CD8-positive, alpha-beta T cell (primary cell): ENCODE measurements at regions of chr11 and their contacts with region 1.

Region 1: GRCh38 chr11:75280227-75280701 is 39.7 kb downstream of the TPBGL start:
- DNase-seq: peak; percentile 60 to 89 (median 79)
- ATAC-seq: peak; percentile 67
- H3K4me3 ChIP-seq: no peak overlapping the region
- H3K4me3 Mint-ChIP-seq: no peak overlapping the region
- H3K27ac ChIP-seq: no peak overlapping the region
- H3K27ac Mint-ChIP-seq: peak overlapping the region; percentile 90
- H3K4me1 ChIP-seq: peaks cover 48% of the 10 kb centered on the region
- H3K4me1 Mint-ChIP-seq: peaks cover 46% of the 10 kb centered on the region
- H3K27me3 ChIP-seq: no peaks in the 10 kb centered on the region
- H3K27me3 Mint-ChIP-seq: no peaks in the 10 kb centered on the region
- CTCF ChIP-seq: peak; percentile 96

Region 2: DNA sequence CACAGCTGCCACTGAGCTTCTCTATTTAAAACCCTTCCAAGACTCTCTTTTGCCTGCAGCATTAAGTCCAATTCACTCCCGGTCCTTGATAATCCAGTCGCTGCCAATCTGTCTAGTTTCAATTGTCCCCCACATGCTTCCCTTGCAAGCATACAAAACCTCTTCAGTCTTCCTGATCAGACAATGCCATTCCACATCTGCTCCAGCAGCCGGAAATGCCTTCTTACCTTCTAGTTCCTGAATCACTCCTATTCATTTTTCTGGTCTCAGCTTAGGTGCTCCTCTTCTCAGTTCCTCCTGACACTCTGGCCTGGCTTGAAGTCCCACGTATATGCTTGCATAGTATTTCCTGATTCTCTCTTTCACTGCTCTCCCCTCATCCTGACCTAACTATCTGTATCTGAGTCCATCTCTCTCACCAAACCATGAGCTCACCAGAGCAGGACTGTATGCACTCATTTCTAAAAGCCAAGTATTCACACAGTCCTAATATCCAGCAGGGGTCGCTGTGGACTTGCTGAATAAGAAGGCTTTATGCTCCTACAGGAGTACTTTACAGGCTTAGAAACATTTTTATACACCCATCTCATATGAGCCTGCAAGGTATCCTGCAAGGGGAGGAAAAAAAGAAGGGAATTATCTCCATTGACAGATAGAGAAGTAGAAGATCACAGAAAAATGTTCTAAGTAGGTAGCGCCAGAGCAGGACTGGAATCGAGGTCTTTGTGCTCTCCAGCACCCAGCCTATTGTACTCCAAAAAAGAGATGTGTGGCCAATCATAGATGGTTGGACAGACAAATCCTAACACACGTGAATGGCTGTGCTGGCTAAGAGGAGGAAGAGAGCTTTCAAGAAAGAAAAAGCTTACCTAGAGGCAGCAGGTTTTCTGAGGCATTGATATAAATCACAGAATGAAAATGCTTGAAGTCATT is 350.6 kb before region 1 on chr11:
- CTCF ChIA-PET with region 1: no interaction called
- POLR2A ChIA-PET with region 1: no interaction called
- intact Hi-C with region 1: no loop called
- DNase-seq: peak; percentile 30 to 86 (median 66)
- ATAC-seq: peak; percentile 76
- H3K4me3 ChIP-seq: no peak overlapping the region
- H3K4me3 Mint-ChIP-seq: no peak overlapping the region
- H3K27ac ChIP-seq: no peak overlapping the region
- H3K27ac Mint-ChIP-seq: no peak overlapping the region
- H3K4me1 ChIP-seq: no peaks in the 10 kb centered on the region
- H3K4me1 Mint-ChIP-seq: no peaks in the 10 kb centered on the region
- H3K27me3 ChIP-seq: no peaks in the 10 kb centered on the region
- H3K27me3 Mint-ChIP-seq: no peaks in the 10 kb centered on the region
- CTCF ChIP-seq: peak; percentile 90

Region 3: GRCh38 chr11:75263944-75264349 is 16.3 kb before region 1 on chr11:
- CTCF ChIA-PET with region 1: interaction called, 48 read pairs
- POLR2A ChIA-PET with region 1: interaction called, 31 read pairs
- intact Hi-C with region 1: no loop called
- DNase-seq: peak in 4 of 9 experiments; percentile 33 to 55 (median 42)
- ATAC-seq: no peak
- H3K4me3 ChIP-seq: no peak overlapping the region
- H3K4me3 Mint-ChIP-seq: no peak overlapping the region
- H3K27ac ChIP-seq: peak overlapping the region in 1 of 2 experiments; percentile 64
- H3K27ac Mint-ChIP-seq: peak overlapping the region; percentile 74
- H3K4me1 ChIP-seq: peaks cover 55% of the 10 kb centered on the region
- H3K4me1 Mint-ChIP-seq: peaks cover 49% of the 10 kb centered on the region
- H3K27me3 ChIP-seq: no peaks in the 10 kb centered on the region
- H3K27me3 Mint-ChIP-seq: no peaks in the 10 kb centered on the region
- CTCF ChIP-seq: no peak

Region 4: GRCh38 chr11:75328426-75329277 is 48.4 kb after region 1 on chr11:
- CTCF ChIA-PET with region 1: interaction called, 20 read pairs
- POLR2A ChIA-PET with region 1: interaction called, 3 read pairs
- intact Hi-C with region 1: loop called (anchors 1 kb)
- DNase-seq: peak in 8 of 9 experiments; percentile 48 to 79 (median 64)
- ATAC-seq: peak; percentile 93
- H3K4me3 ChIP-seq: no peak overlapping the region
- H3K4me3 Mint-ChIP-seq: peak overlapping the region; percentile 58
- H3K27ac ChIP-seq: peak overlapping the region; percentile 37 to 47
- H3K27ac Mint-ChIP-seq: peak overlapping the region; percentile 90
- H3K4me1 ChIP-seq: peaks cover 60% of the 10 kb centered on the region
- H3K4me1 Mint-ChIP-seq: peaks cover 69% of the 10 kb centered on the region
- H3K27me3 ChIP-seq: no peaks in the 10 kb centered on the region
- H3K27me3 Mint-ChIP-seq: no peaks in the 10 kb centered on the region
- CTCF ChIP-seq: no peak

Region 5: GRCh38 chr11:75342903-75343870 is 62.9 kb after region 1 on chr11:
- CTCF ChIA-PET with region 1: interaction called, 15 read pairs
- POLR2A ChIA-PET with region 1: interaction called, 6 read pairs
- intact Hi-C with region 1: loop called in 1 of 2 experiments (anchors 5 kb)
- DNase-seq: no peak
- ATAC-seq: no peak
- H3K4me3 ChIP-seq: no peak overlapping the region
- H3K4me3 Mint-ChIP-seq: no peak overlapping the region
- H3K27ac ChIP-seq: peak overlapping the region in 1 of 2 experiments; percentile 12
- H3K27ac Mint-ChIP-seq: peak overlapping the region; percentile 85
- H3K4me1 ChIP-seq: peaks cover 98% of the 10 kb centered on the region
- H3K4me1 Mint-ChIP-seq: peaks cover 97% of the 10 kb centered on the region
- H3K27me3 ChIP-seq: no peaks in the 10 kb centered on the region
- H3K27me3 Mint-ChIP-seq: no peaks in the 10 kb centered on the region
- CTCF ChIP-seq: no peak

Region 6: GRCh38 chr11:75380711-75381420 is 100.6 kb after region 1 on chr11:
- CTCF ChIA-PET with region 1: interaction called, 650 read pairs
- POLR2A ChIA-PET with region 1: interaction called, 27 read pairs
- intact Hi-C with region 1: loop called (anchors 1 kb)
- DNase-seq: no peak
- ATAC-seq: no peak
- H3K4me3 ChIP-seq: no peak overlapping the region
- H3K4me3 Mint-ChIP-seq: no peak overlapping the region
- H3K27ac ChIP-seq: no peak overlapping the region
- H3K27ac Mint-ChIP-seq: peak overlapping the region; percentile 56
- H3K4me1 ChIP-seq: peaks cover 23% of the 10 kb centered on the region
- H3K4me1 Mint-ChIP-seq: peaks cover 20% of the 10 kb centered on the region
- H3K27me3 ChIP-seq: no peaks in the 10 kb centered on the region
- H3K27me3 Mint-ChIP-seq: no peaks in the 10 kb centered on the region
- CTCF ChIP-seq: no peak

Region 7: DNA sequence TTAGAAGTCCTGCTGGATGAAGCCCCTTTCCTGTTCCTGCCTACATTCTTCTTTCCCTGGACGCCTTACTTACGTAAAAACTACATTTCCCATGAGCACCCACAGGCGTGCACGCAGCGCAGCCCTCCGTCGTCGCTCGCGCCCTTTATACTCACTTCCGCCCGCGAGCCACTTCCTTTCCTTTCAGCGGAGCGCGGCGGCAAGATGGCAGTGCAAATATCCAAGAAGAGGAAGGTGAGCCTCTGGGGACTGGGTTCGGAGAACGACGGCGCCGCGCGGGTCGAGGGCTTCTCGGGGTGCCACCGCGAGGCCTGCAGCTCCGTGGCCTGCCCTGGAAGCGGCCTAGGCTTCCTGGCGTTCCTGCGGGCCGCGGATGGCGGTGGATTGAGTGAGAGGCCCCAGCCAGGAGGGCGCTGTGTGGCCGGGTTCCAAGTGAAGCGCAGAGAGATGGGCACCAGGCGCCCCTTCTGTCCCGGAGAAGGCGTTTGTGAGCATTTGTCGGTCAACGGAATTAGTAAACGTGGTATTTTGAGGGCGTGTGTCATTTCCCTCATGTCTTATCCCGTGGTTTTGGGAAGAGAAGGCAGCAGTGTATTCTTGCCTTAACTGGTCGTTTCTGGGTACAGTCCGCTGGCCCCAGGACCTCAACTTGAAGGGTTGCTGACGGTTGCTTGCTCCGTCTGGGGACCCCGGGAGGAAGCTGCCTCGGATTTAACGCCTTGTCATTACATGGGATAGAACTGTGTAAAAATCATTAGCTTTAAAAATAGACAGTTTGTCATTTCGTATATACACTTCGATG is 119.3 kb after region 1 on chr11 and contains the start of gene RPS3:
- CTCF ChIA-PET with region 1: interaction called, 24 read pairs
- POLR2A ChIA-PET with region 1: interaction called, 16 read pairs
- intact Hi-C with region 1: no loop called
- DNase-seq: peak; percentile 72 to 93 (median 88)
- ATAC-seq: peak; percentile 88
- H3K4me3 ChIP-seq: peak within 1 kb of the TSS; percentile 69 to 76
- H3K4me3 Mint-ChIP-seq: peak within 1 kb of the TSS; percentile 95
- H3K27ac ChIP-seq: peak within 1 kb of the TSS; percentile 88 to 89
- H3K27ac Mint-ChIP-seq: peak within 1 kb of the TSS; percentile 95
- H3K4me1 ChIP-seq: peaks cover 28% of the 10 kb centered on the region
- H3K4me1 Mint-ChIP-seq: peaks cover 48% of the 10 kb centered on the region
- H3K27me3 ChIP-seq: no peaks in the 10 kb centered on the region
- H3K27me3 Mint-ChIP-seq: no peaks in the 10 kb centered on the region
- CTCF ChIP-seq: no peak
- total RNA-seq, gene RPS3: 4,683 to 5,039 TPM

Region 8: DNA sequence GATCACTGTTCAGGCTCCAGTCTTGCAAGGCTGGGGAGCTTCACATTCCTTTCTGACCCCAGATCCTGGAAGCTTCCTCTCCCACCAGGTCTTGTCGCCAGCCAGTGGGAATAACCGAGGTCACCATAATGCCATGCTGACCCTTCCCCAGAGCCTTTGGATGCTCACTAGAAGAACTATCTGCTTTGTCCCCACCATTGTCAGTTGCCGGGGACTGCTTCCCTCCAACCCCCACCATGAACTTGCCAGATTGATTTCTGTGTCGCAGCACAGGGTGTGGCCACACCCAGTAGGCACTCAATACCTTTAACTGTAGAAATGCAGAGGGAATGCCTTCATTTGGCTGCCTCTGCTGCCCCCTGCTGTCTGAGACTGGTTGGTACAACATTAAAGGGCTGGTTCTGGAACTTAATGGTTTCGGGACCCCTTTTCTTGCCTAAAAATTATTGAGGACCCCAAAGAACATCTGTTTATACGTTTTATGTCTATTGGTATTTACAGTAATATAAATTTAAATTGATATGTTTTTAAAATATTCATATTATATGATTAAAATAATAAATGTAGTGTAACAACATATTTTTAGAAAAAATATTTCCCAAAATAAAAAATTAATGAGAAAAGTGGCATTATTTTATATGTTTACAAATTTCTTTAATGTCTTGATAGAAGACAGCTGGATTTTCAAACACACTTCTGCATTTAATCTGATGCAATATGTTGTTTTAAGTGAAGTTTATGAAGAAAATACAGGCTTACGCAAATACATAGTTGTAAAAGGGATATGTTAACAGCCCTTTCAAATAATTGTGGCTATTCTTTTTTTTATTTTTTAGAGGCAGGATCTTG is 252.2 kb after region 1 on chr11:
- CTCF ChIA-PET with region 1: interaction called, 25 read pairs
- POLR2A ChIA-PET with region 1: no interaction called
- intact Hi-C with region 1: loop called (anchors 1 to 2 kb)
- DNase-seq: peak; percentile 70 to 91 (median 84)
- ATAC-seq: peak; percentile 91
- H3K4me3 ChIP-seq: no peak overlapping the region
- H3K4me3 Mint-ChIP-seq: no peak overlapping the region
- H3K27ac ChIP-seq: no peak overlapping the region
- H3K27ac Mint-ChIP-seq: no peak overlapping the region
- H3K4me1 ChIP-seq: peaks cover 8% of the 10 kb centered on the region
- H3K4me1 Mint-ChIP-seq: peaks cover 31% of the 10 kb centered on the region
- H3K27me3 ChIP-seq: no peaks in the 10 kb centered on the region
- H3K27me3 Mint-ChIP-seq: no peaks in the 10 kb centered on the region
- CTCF ChIP-seq: peak; percentile 98

Region 9: DNA sequence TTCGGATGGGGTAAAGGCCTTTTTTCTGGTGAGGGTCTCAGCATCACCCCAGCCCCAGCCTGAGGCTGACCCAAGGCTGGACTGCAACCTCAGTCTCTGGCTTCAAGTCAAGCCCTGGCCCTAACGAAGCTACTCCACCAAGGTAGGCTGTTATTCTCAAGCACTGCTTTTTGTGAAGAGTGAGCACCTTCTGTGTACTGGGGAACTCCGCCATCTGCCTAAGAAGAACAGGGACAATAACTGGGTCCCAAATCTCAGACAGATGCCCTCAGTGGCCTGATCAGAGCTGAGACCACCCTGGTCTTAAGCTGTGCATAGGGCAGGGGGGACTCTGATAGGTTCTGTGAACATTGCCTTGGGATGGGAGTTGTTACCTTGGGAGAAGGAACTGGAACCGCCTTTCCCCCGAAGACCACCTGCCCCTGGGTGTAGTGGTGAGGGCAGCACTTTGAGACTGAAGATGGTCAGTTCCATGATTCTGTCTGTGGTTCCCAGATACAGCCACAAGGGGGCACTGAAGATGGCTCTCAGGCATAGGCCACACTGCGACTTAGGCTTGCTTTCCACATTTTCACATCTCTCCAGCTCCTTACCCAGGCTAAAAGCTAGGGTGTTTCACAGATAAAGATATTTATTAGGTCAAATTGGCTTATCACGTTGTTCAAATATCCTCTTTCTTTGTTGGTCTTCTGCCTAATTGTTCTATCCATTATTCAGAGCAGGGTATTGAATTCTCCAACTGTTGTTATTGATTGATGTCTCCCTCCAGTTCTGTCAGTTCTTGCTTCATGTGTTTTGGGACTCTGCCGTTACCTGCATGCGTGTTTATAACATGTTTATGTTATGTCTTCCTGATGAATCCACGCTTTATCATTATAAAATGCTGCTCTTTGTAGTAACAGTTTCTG is 522.9 kb after region 1 on chr11:
- CTCF ChIA-PET with region 1: no interaction called
- POLR2A ChIA-PET with region 1: no interaction called
- intact Hi-C with region 1: no loop called
- DNase-seq: peak; percentile 51 to 80 (median 75)
- ATAC-seq: peak; percentile 98
- H3K4me3 ChIP-seq: no peak overlapping the region
- H3K4me3 Mint-ChIP-seq: no peak overlapping the region
- H3K27ac ChIP-seq: no peak overlapping the region
- H3K27ac Mint-ChIP-seq: no peak overlapping the region
- H3K4me1 ChIP-seq: no peaks in the 10 kb centered on the region
- H3K4me1 Mint-ChIP-seq: peaks cover 5% of the 10 kb centered on the region
- H3K27me3 ChIP-seq: no peaks in the 10 kb centered on the region
- H3K27me3 Mint-ChIP-seq: no peaks in the 10 kb centered on the region
- CTCF ChIP-seq: peak; percentile 91